Activated CD8-positive, alpha-beta T cell treated with anti-CD3 and anti-CD28 coated beads, Interleukin-2, amount 10 ng/mL, durations not matched to agents 7 days and 5 days (primary cell): ENCODE measurements at regions of chr3 and their contacts with region 1.

Region 1: DNA sequence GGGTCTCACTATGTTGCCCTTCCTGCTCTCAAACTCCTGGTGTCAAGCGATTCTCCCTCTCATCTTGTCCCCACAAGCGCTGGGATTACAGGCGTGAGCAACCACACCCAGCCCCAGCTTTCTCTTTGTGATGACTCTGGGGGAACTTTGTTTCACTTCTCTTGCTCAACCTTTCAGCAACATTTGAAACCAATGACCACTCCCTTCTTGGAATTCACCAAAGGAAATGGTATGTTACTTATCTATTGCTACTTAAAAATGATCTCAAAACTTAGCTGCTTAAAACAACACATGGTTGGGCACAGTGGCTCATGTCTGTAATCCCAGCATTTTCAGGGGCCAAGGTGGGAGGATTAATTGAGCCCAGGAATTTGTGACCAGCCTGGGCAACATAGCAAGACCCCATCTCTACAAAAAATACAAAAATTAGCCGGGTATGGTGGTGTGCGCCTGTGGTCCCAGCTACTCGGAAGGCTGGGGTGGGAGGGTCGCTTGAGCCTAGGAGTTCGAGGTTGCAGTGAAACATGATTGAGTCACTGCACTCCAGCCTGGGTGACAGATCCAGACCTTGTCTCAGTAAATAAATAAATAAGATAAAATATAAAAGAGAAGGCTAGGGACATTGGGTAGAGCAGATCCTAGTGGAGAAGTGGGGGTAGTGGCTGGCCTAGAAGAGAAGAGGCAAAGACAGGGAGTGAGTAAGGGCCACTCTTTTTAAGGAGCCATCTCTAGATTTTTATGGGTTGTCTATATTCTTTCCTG is 10.3 kb upstream of the COPG1 start:
- DNase-seq: peak; percentile 70
- ATAC-seq: peak; percentile 80
- H3K4me3 Mint-ChIP-seq: peak overlapping the region; percentile 69
- H3K27ac Mint-ChIP-seq: peak overlapping the region; percentile 93
- H3K4me1 Mint-ChIP-seq: peaks cover 53% of the 10 kb centered on the region
- H3K27me3 Mint-ChIP-seq: no peaks in the 10 kb centered on the region

Region 2: DNA sequence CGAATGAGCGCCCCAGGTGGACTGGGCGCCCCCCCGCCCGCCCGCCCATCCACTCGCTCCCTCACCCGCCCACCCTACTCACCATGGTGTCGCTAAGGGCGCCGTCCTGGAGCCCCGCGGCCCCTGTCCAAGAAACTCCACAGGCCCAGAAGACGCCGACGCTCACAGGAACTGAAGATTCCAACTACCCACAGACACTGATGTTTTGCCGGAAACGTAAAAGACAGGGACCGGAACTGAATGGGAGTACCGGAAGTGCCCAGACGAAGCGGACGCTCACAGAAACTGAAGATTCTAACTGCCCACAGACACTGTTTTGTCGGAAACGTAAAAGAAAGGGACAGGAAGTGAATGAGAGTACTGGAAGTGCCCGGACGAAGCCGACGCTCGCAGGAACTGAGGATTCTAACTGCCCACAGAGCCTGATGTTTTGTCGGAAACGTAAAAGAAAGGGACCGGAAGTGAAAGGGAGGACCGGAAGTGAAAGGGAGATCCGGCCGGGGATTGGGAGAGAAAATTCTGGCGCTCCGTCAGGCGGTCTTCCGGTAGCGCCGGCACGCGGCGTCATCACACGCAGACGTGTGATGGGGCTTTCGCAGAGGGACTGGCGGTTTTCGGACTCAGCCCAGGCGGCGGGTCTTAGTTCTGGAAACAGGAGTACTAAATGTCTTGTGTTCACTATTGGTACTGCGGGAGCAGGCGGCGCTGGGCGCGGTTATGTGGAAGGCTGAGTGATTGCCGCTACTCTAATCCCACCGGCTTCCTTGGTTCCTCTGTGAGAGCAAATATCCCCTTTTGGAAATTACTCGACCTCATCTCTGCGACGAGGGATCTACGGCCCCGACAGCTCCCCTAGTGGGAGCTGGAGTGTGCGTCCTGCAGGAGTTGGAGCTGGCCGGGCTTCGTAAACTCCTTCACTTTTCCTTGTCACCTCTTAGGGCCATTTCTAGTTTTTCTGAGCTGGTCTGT is 78.0 kb before region 1 on chr3 and contains the start of gene ISY1:
- CTCF ChIA-PET with region 1: interaction called, 15 read pairs
- POLR2A ChIA-PET with region 1: interaction called, 3 read pairs
- DNase-seq: peak; percentile 93
- ATAC-seq: peak; percentile 84
- H3K4me3 Mint-ChIP-seq: peak within 1 kb of the TSS; percentile 91
- H3K27ac Mint-ChIP-seq: peak within 1 kb of the TSS; percentile 99
- H3K4me1 Mint-ChIP-seq: peaks cover 36% of the 10 kb centered on the region
- H3K27me3 Mint-ChIP-seq: no peaks in the 10 kb centered on the region
- total RNA-seq, gene ISY1: 57.9 to 65.7 TPM

Region 3: GRCh38 chr3:129224984-129225393 is 14.1 kb before region 1 on chr3:
- CTCF ChIA-PET with region 1: interaction called, 30 read pairs
- POLR2A ChIA-PET with region 1: interaction called, 6 read pairs
- DNase-seq: peak; percentile 48
- ATAC-seq: peak; percentile 77
- H3K4me3 Mint-ChIP-seq: peak overlapping the region; percentile 57
- H3K27ac Mint-ChIP-seq: peak overlapping the region; percentile 86
- H3K4me1 Mint-ChIP-seq: peaks cover 47% of the 10 kb centered on the region
- H3K27me3 Mint-ChIP-seq: no peaks in the 10 kb centered on the region

Region 4: DNA sequence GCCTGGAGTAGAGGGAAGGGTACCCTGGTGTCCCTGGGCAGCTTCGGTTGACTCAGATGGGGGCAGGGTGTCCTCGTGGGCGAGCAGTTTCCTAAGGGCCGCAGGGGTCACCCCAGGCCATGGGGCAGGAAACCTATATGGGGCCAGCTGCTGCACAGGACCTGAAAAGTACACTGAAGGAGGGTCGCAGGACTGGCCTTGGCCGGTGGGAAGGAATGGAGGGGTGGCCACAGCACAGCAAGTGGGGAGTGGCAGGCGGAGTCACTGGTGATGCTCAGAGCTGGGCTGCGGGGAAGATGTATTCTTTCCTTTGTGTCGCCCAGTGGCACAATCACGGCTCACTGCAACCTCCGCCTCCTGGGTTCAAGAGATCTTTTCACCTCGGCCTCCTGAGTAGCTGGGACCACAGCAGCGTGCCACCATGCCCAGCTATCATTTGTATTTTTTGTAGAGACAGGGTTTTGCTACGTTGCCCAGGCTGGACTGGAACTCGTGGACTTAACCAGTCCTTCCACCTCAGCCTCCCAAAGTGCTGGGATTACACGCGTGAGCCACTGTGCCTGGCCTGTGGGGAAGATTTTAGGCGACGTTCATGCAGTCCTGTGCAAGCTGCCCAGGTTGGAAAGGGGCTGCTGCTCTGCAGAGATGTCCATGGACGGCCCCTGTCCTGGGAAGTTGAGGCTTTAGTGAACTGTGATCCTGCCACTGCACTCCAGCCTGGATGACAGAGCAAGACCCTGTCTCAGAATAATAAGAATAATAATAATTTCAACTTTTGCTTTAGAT is 132.1 kb after region 1 on chr3:
- CTCF ChIA-PET with region 1: no interaction called
- POLR2A ChIA-PET with region 1: no interaction called
- DNase-seq: no peak
- ATAC-seq: peak; percentile 24
- H3K4me3 Mint-ChIP-seq: no peak overlapping the region
- H3K27ac Mint-ChIP-seq: no peak overlapping the region
- H3K4me1 Mint-ChIP-seq: no peaks in the 10 kb centered on the region
- H3K27me3 Mint-ChIP-seq: no peaks in the 10 kb centered on the region